Activated CD4-positive, alpha-beta memory T cell treated with anti-CD3 and anti-CD28 coated beads, Interleukin-2, amount 10 ng/mL, durations not matched to agents 7 days and 5 days (primary cell): ENCODE measurements at regions of chr17 and their contacts with region 1.

Region 1: DNA sequence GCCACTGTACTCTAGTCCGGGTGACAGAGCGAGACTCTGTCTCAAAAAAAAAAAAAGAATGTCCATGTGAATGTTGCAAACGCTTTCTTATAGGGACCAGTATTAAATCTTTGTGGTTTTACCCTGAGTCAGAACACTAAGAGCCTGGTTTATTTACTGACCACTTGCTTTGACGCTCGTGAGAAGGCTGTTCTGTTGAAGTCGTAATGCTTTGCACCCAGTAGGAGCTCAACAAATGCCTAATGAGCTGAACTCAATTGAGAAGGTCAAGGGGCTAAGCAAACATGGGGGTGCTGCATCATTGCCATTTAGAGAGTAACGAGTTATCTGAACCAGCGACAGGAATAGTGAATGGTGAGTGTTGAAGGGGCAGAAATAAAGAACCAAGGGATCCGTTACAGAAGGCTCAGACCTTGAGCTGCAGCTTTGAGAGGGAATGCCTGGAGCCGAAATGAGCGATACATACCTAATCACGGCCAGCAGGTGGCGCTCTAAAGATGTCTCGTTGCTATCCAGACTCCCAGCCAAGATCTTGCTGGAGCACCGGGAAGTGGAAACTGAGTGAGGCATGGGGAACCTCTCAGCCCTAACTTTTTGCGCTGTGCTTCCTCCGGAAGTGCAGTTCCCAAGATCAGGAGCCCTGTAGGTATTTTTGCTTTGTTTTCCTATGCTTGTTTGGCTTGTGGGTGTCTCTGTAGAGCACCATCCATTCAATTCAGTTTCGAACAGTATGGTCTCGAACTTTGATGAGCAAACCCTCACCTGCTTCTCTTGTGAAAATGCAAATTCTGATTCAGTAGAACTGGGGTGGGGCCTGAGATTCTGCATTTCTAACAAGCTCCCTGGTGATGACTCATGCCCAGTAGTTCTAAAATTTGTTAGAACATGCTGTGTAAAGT is 12.6 kb upstream of the RNF222 start:
- DNase-seq: peak; percentile 77
- H3K4me3 Mint-ChIP-seq: no peak overlapping the region
- H3K27ac Mint-ChIP-seq: no peak overlapping the region
- H3K4me1 Mint-ChIP-seq: peaks cover 35% of the 10 kb centered on the region
- H3K27me3 Mint-ChIP-seq: peaks cover 17% of the 10 kb centered on the region

Region 2: DNA sequence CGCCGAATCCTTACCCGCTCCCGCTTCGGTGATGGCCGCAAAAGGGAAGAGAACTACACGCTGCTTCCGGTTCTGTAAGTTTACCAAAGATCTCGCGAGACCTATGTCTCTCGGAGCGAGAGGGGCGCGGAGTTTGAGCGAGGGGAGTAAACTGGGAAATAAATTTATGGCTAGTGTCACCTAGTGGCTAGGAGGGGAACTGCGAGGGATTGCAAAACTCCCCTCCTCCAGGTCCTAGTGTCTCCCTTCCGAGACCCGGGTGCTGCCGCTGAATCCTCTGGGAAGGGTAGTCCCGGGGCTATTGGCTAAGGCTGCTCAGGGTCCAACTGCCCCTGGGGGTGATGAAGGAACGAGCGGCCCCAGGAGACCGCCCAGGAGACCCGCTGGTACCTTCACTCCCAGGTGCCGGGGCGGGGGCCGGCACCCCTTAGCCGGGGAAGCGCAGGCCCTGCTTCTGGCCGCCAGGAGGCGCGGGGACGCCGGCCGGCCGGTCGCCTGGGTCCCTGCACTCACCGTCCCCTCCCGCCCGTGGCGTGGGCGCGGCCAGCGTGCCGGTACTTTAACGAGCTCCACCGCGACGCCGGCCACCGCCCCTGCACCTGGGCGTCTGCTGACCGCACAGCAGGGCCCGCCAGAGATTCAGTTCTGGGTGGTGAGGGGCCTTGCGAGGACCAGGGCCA is 26.9 kb before region 1 on chr17 and contains the start of gene RPL26:
- CTCF ChIA-PET with region 1: interaction called, 13 read pairs
- POLR2A ChIA-PET with region 1: interaction called, 4 read pairs
- DNase-seq: peak; percentile 97
- H3K4me3 Mint-ChIP-seq: peak within 1 kb of the TSS; percentile 87
- H3K27ac Mint-ChIP-seq: peak within 1 kb of the TSS; percentile 75
- H3K4me1 Mint-ChIP-seq: peaks cover 67% of the 10 kb centered on the region
- H3K27me3 Mint-ChIP-seq: no peaks in the 10 kb centered on the region
- total RNA-seq, gene RPL26: 1,912 to 1,913 TPM

Region 3: DNA sequence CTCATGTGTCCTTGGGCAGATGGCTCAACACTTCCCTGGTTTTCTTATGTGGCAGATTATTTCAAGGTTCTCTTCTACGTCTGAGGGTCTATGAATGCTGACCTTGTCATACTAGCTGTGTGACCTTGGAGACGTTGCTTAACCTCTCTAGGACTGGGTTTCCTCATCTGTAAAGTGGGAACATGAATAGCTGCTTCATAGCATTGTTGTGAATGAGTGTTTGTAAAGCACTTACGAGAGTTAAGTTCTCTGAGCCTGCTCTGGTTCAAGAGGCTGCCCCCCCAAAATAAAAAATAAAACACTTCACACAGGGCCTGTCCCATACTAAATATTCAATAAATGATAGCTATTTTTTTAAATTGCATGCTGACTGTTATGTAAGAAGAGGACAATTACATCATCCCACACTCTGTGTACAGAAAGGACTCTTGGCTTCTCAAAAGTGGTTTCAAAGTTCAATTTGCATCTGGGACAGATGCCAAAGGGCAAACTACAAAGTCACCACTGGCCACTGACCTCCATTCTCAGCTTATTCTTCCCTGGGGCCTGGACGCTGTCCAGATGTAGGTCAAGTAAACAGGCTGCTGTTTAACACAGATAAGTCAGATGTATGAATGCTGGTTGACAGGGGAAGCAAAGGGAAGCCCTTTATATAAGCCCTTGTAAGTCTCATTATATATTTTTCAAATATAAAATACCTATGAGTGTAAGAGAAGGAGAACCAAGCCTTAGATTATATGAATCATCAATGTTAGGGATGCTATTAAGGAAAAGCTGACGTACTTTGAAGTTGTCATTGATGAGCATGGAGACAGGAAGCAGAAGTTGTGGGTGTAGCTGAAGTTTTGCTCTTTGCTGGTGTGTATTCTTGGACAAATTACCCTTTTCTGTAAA is 10.1 kb after region 1 on chr17:
- CTCF ChIA-PET with region 1: interaction called, 25 read pairs
- POLR2A ChIA-PET with region 1: no interaction called
- DNase-seq: no peak
- H3K4me3 Mint-ChIP-seq: no peak overlapping the region
- H3K27ac Mint-ChIP-seq: no peak overlapping the region
- H3K4me1 Mint-ChIP-seq: no peaks in the 10 kb centered on the region
- H3K27me3 Mint-ChIP-seq: peaks cover 63% of the 10 kb centered on the region

Region 4: GRCh38 chr17:8436169-8436843 is 26.1 kb after region 1 on chr17:
- CTCF ChIA-PET with region 1: interaction called, 11 read pairs
- POLR2A ChIA-PET with region 1: interaction called, 4 read pairs
- DNase-seq: peak; percentile 73
- H3K4me3 Mint-ChIP-seq: peak overlapping the region; percentile 95
- H3K27ac Mint-ChIP-seq: peak overlapping the region; percentile 95
- H3K4me1 Mint-ChIP-seq: peaks cover 40% of the 10 kb centered on the region
- H3K27me3 Mint-ChIP-seq: no peaks in the 10 kb centered on the region